Right ventricle myocardium superior (tissue), 1 donor: ENCODE measurements at regions of chr20 and their contacts with region 1.

Region 1: GRCh38 chr20:38893565-38894090 is 32.6 kb upstream of the FAM83D start:
- DNase-seq: peak; percentile 82
- ATAC-seq: peak; percentile 90

Region 2: GRCh38 chr20:38658879-38659596 is 234.6 kb before region 1 on chr20:
- intact Hi-C with region 1: loop called (anchors 10 kb)
- DNase-seq: no peak
- ATAC-seq: peak; percentile 81

Region 3: DNA sequence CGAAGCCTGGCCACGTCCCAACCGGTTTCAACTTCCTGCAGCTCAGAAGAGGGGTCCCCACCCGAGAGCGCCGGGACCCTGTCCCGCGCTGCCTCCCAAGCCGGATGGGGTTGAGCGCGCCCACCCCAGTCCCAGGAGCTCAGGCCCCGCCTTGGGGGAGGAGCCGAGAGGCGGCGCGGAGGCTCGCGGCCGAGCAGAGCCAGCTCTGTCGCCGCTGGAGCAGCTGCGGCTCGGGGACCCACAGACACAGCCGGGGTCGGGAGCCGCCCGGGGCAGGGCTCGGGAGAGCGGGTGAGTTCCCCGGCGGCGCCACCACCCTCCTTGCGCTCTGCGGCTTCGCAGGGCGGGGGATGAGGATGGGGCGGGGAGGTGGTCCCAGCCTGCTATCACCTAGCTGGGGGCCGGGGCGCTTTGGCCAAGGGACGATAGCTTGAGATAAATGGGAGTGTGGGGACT is 88.1 kb before region 1 on chr20 and contains the start of gene PPP1R16B:
- intact Hi-C with region 1: no loop called
- DNase-seq: peak; percentile 71
- ATAC-seq: peak; percentile 91
- total RNA-seq, gene PPP1R16B: 6.8 TPM

Region 4: DNA sequence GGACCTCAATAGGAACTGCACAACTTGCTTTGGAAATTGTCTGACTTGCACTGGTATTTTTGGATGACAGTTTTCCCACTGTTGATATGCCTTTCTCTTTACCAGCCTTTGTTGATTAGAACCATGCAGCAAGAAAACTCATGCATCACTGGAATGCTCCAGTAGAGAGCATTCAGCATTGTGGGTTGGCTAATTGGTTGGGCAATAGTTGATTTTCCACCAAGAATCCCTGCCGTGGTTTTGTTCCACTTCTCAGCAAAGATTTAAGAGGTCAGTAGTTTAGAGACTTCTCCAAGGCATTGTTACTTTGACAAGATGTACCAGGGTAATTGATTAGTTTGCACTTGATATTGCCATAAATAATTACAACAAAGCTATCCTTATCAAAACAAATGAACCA is 328.5 kb after region 1 on chr20:
- intact Hi-C with region 1: no loop called
- DNase-seq: no peak
- ATAC-seq: no peak